ENCODE measurements at regions of chr11 and their contacts with region 1.

Region 1: DNA sequence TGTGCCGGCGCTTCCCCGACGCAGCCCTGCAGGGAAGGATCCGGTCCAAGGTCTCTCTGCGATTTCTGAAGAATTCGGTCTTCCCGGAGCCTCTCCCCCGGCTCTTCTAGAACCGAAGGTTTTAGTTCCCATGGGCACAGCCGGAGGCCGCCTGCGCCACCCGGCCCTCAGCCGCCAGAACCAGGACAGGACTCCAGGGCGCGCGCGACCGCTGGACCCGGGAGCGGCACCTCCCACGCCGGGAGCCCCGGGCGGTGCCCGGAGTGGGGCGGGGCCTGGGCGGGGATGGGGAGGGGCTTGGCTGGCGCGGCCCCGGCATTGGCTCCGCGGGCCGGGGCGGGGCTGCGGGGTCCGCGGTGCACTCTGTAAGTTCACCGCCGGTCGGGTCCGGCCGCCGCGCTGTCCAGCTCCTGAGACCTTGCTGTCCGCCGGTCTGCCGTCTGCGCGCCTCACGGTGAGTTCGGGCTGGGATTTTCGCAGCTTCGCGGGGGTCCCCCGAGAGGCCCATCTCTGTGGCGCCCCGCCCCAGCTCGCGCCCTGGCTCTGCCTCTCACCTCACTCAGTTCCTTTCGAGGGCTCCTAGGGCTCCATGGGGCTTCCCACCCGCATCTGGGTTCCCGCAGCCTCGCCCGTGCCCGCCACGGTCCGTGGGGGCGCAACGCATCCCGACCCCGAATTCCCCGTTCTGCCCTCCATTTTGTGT is at the start of gene CDC42EP2:
- DNase-seq: peak; percentile 54 to 77 (median 73)
- H3K4me3 ChIP-seq: peak within 1 kb of the TSS; percentile 75
- H3K4me3 Mint-ChIP-seq: peak within 1 kb of the TSS; percentile 74 to 88 (median 77)
- H3K27ac ChIP-seq: no peak within 1 kb of the TSS
- H3K27ac Mint-ChIP-seq: peak within 1 kb of the TSS in 1 of 8 donors; percentile 43
- H3K4me1 ChIP-seq: peaks cover 12% of the 10 kb centered on the region
- H3K4me1 Mint-ChIP-seq: peaks cover 3 to 10% (median 10%) of the 10 kb centered on the region in 3 donors
- H3K27me3 ChIP-seq: no peaks in the 10 kb centered on the region
- H3K27me3 Mint-ChIP-seq: peaks cover 1 to 4% of the 10 kb centered on the region in 2 donors
- total RNA-seq, gene CDC42EP2: 0.62 to 1.0 TPM

Region 2: GRCh38 chr11:65204646-65205601 is 109.7 kb before region 1 on chr11:
- CTCF ChIA-PET with region 1: interaction called, 19 read pairs
- POLR2A ChIA-PET with region 1: interaction called, 5 read pairs
- DNase-seq: peak; percentile 17 to 62 (median 35)
- H3K4me3 ChIP-seq: no peak overlapping the region
- H3K4me3 Mint-ChIP-seq: no peak overlapping the region
- H3K27ac ChIP-seq: no peak overlapping the region
- H3K27ac Mint-ChIP-seq: peak overlapping the region in 1 of 8 donors; percentile 87
- H3K4me1 ChIP-seq: no peaks in the 10 kb centered on the region
- H3K4me1 Mint-ChIP-seq: peaks cover 4% of the 10 kb centered on the region in 3 donors
- H3K27me3 ChIP-seq: no peaks in the 10 kb centered on the region
- H3K27me3 Mint-ChIP-seq: no peaks in the 10 kb centered on the region

Region 3: GRCh38 chr11:65219930-65220213 is 94.8 kb before region 1 on chr11:
- CTCF ChIA-PET with region 1: interaction called, 43 read pairs
- POLR2A ChIA-PET with region 1: interaction called, 3 read pairs
- DNase-seq: no peak
- H3K4me3 ChIP-seq: no peak overlapping the region
- H3K4me3 Mint-ChIP-seq: no peak overlapping the region
- H3K27ac ChIP-seq: no peak overlapping the region
- H3K27ac Mint-ChIP-seq: peak overlapping the region in 1 of 8 donors; percentile 72
- H3K4me1 ChIP-seq: peaks cover 4% of the 10 kb centered on the region
- H3K4me1 Mint-ChIP-seq: peaks cover 7 to 17% (median 12%) of the 10 kb centered on the region in 3 donors
- H3K27me3 ChIP-seq: no peaks in the 10 kb centered on the region
- H3K27me3 Mint-ChIP-seq: peaks cover 4 to 5% of the 10 kb centered on the region in 2 donors

Region 4: GRCh38 chr11:65225279-65226102 is 89.2 kb before region 1 on chr11:
- CTCF ChIA-PET with region 1: interaction called, 43 read pairs
- POLR2A ChIA-PET with region 1: interaction called, 3 read pairs
- DNase-seq: peak; percentile 42 to 73 (median 46)
- H3K4me3 ChIP-seq: peak overlapping the region; percentile 48
- H3K4me3 Mint-ChIP-seq: peak overlapping the region; percentile 64 to 87 (median 68)
- H3K27ac ChIP-seq: peak overlapping the region; percentile 65
- H3K27ac Mint-ChIP-seq: peak overlapping the region in 1 of 8 donors; percentile 76
- H3K4me1 ChIP-seq: peaks cover 7% of the 10 kb centered on the region
- H3K4me1 Mint-ChIP-seq: peaks cover 7 to 16% (median 12%) of the 10 kb centered on the region in 3 donors
- H3K27me3 ChIP-seq: no peaks in the 10 kb centered on the region
- H3K27me3 Mint-ChIP-seq: peaks cover 22 to 27% of the 10 kb centered on the region in 2 donors

Region 5: DNA sequence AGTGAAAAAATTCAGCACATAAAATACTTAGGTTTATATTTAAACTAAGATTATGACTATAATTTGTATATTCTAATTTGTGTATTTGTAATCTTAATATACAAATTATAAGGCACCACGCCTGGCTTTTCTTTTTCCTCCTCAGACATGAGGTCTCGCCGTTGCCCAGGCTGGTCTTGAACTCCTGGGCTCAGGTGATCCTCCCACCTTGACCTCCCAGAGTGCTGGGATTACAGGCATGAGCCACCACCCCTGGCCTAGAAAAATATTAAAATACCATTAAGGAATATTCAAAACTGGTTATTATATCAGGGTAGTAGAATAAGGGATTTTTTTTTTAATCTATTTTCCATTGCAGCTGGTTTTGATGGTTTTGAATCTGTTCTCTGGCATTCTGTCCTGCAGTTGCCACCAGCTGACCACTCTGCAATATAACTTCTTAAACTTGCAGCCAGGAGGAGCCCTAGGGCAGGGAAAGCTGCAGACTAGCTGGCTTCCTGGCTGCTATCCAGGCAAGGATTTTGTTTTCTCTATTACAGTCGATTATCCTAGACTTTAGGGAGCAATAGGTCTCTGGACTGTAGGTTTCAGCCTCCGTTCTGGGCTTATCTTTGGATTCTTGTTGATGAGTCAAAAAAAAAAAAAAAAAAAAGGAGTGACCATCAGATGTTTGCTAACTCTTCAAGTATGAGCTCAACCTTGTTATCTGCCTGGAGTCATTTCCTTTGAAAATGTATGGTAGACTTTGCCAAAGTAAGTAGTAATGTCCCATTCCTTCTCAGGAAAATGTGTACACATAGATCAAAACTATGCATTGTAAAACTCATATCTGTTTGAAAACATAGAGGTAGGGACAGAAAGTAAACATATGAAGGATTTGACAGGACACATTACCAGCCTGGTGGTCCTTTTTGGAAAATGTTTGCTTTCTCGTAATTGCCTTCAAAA is 39.6 kb before region 1 on chr11:
- CTCF ChIA-PET with region 1: interaction called, 75 read pairs
- POLR2A ChIA-PET with region 1: interaction called, 7 read pairs
- DNase-seq: peak in 4 of 5 donors; percentile 4 to 56 (median 18)
- H3K4me3 ChIP-seq: no peak overlapping the region
- H3K4me3 Mint-ChIP-seq: no peak overlapping the region
- H3K27ac ChIP-seq: no peak overlapping the region
- H3K27ac Mint-ChIP-seq: peak overlapping the region in 1 of 8 donors; percentile 4
- H3K4me1 ChIP-seq: no peaks in the 10 kb centered on the region
- H3K4me1 Mint-ChIP-seq: peaks cover 3 to 10% (median 9%) of the 10 kb centered on the region in 3 donors
- H3K27me3 ChIP-seq: no peaks in the 10 kb centered on the region
- H3K27me3 Mint-ChIP-seq: no peaks in the 10 kb centered on the region

Region 6: GRCh38 chr11:65329944-65330403 is 15.3 kb after region 1 on chr11:
- CTCF ChIA-PET with region 1: interaction called, 161 read pairs
- POLR2A ChIA-PET with region 1: interaction called, 4 read pairs
- DNase-seq: peak; percentile 60 to 85 (median 76)
- H3K4me3 ChIP-seq: no peak overlapping the region
- H3K4me3 Mint-ChIP-seq: peak overlapping the region in 2 of 7 donors; percentile 27 to 76
- H3K27ac ChIP-seq: no peak overlapping the region
- H3K27ac Mint-ChIP-seq: peak overlapping the region in 5 of 8 donors; percentile 33 to 92 (median 63)
- H3K4me1 ChIP-seq: peaks cover 8% of the 10 kb centered on the region
- H3K4me1 Mint-ChIP-seq: peaks cover 17 to 20% (median 18%) of the 10 kb centered on the region in 3 donors
- H3K27me3 ChIP-seq: no peaks in the 10 kb centered on the region
- H3K27me3 Mint-ChIP-seq: peaks cover 0 to 8% of the 10 kb centered on the region in 2 donors

Region 7: DNA sequence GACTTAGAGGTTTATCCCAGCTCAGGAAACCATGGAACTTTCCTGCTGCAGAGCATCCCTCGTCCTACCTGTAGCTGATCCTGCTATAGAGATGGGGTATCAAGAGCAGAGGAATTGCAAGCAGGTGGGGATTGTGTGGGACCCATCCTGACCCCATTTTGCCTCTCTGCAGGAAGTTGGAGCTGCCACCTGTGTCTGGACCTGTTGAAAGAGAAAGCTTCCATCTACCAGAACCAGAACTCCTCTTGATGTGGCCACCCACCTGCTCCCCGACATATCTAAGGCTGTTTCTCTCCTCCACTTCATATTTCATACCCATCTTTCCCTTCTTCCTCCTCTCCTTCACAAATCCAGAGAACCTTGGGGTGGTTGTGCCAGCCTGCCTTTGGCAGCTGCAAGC is 36.9 kb after region 1 on chr11:
- CTCF ChIA-PET with region 1: interaction called, 11 read pairs
- POLR2A ChIA-PET with region 1: no interaction called
- DNase-seq: no peak
- H3K4me3 ChIP-seq: no peak overlapping the region
- H3K4me3 Mint-ChIP-seq: no peak overlapping the region
- H3K27ac ChIP-seq: no peak overlapping the region
- H3K27ac Mint-ChIP-seq: peak overlapping the region in 1 of 8 donors; percentile 86
- H3K4me1 ChIP-seq: peaks cover 14% of the 10 kb centered on the region
- H3K4me1 Mint-ChIP-seq: peaks cover 0 to 14% (median 11%) of the 10 kb centered on the region in 3 donors
- H3K27me3 ChIP-seq: no peaks in the 10 kb centered on the region
- H3K27me3 Mint-ChIP-seq: peaks cover 0 to 5% of the 10 kb centered on the region in 2 donors

Region 8: DNA sequence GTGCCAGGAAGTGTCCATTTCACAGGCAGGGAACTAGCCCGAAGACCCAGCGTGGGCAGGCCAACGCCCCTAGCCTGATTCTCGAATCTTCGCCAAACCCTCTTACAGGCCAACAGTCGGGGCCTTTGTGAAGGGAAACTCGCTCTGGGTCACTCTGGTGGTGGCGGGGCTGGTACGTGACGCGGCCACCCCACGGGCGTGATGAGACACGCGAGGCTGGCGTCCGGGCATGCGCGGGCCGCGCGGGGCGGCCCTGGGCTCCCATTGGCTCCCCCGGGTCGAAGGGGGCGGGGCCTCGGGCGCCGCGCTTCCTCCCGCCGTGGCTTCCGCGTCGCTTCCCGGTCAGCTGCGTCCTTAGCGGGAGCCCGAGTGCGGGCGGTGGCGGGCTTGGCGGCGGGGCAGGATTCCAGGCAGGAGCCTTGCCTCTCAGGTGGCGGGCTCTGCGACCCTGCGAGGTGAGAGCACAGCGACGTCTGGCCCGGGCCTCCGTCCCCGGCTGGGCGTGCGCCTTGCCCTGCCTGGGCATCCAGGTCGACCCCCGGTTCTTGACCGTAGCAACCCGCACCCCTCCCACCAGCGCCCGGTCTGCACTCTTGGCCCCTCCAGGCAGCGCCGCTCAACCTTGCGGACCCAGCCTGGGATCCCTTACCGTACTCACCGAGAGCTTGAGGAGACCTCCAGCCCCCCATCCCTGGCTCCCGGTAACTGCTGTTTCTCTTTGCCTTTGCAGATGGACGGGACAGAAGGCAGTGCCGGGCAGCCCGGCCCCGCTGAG is 71.8 kb after region 1 on chr11 and contains the start of gene FRMD8:
- CTCF ChIA-PET with region 1: no interaction called
- POLR2A ChIA-PET with region 1: no interaction called
- DNase-seq: peak; percentile 87 to 94 (median 88)
- H3K4me3 ChIP-seq: peak within 1 kb of the TSS; percentile 78
- H3K4me3 Mint-ChIP-seq: peak within 1 kb of the TSS; percentile 89 to 94 (median 90)
- H3K27ac ChIP-seq: peak within 1 kb of the TSS; percentile 89
- H3K27ac Mint-ChIP-seq: peak within 1 kb of the TSS; percentile 97 to 100 (median 99)
- H3K4me1 ChIP-seq: peaks cover 84% of the 10 kb centered on the region
- H3K4me1 Mint-ChIP-seq: peaks cover 69 to 90% (median 71%) of the 10 kb centered on the region in 3 donors
- H3K27me3 ChIP-seq: no peaks in the 10 kb centered on the region
- H3K27me3 Mint-ChIP-seq: no peaks in the 10 kb centered on the region
- total RNA-seq, gene FRMD8: 44.9 to 49.8 TPM